ENCODE measurements at regions of chr2 and their contacts with region 1.

Region 1: DNA sequence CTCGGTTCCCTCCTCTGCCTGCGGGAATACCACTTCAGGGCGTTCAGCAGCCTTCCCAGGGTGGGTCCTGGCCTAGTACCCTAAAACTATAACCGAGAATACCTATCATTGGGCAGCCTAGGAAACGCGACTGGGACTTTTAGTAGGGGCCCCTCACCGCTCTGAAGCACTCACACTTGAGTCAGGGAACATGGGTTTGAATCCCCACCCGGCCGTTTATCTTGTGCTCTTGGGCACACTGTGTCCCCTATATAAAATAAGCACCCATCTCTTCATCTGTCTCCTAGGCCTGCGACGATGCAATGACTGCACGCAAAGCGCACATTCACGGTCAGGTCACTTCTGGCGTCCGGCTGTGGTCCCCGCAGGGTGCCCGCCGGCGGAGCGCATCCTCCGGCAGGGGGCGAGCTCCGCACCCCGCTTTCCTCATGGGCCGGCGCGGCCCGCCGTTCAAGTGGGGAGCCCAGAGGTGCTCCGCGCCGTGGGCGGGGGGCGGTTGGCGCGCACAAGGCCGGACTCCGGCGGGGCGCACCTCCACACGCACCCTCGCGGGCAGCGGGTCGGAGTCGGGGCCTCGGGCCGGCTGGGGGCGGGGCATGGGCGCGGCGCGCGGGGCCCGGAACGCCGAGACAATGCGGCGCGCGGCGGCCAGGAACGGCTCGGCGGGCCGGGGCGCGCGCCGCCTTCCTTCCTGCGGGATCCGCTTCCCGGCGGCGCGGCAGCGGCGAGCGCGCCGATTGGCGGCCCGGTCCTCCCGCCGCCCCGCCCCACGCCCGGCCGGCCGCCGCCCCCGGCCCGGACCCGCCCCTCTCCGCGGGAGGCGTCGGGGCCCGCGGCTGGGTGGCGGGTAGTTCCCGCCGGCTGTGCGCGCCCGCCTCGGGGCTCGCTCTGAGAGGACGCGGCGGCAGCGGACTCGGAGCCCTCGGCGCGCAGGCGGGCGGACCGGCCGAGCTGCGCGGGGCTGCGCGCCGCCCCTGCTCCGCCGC is at the start of gene ASAP2:
- DNase-seq: peak; percentile 51 to 81
- H3K4me3 ChIP-seq: peak within 1 kb of the TSS; percentile 99
- H3K27ac ChIP-seq: peak within 1 kb of the TSS; percentile 74
- H3K4me1 ChIP-seq: peaks cover 44% of the 10 kb centered on the region
- H3K27me3 ChIP-seq: no peaks in the 10 kb centered on the region
- CTCF ChIP-seq: peak; percentile 84
- total RNA-seq, gene ASAP2: 60.3 and 66.8 TPM in 2 replicates

Region 2: DNA sequence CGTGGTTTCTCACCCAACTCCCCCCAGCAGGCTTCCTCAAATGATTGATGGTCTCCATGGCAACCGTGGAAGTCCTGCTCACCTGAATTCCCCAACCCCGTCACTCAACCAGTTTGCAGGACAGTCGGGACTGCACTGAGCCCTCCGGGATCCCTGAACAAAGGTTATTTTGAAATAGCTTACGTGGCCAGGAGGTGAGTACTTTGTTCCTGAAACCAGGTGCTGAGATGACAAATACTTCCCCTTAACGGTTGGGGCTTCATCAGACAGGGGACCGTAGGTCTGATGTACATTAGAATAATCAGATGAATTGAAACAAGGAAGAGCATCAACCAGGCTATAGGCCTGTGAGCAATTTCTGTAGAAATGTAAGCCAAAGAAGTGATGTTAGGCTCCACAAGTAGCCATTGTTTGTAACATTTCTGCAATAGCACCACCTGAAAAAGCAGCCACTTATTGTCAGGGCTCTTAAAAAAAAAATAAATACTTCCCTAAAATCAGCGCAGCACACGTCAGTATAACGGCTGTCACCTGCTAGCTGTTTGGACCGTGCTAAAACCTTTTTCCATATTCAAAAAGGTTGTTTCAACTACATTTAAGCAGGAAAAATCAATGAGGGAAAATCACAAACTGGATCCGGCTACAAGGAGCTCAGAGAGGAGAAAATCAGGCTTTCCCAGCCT is 730.8 kb before region 1 on chr2:
- CTCF ChIA-PET with region 1: no interaction called
- POLR2A ChIA-PET with region 1: no interaction called
- intact Hi-C with region 1: no loop called
- DNase-seq: no peak
- H3K4me3 ChIP-seq: no peak overlapping the region
- H3K27ac ChIP-seq: no peak overlapping the region
- H3K4me1 ChIP-seq: no peaks in the 10 kb centered on the region
- H3K27me3 ChIP-seq: peaks cover 91% of the 10 kb centered on the region
- CTCF ChIP-seq: no peak

Region 3: DNA sequence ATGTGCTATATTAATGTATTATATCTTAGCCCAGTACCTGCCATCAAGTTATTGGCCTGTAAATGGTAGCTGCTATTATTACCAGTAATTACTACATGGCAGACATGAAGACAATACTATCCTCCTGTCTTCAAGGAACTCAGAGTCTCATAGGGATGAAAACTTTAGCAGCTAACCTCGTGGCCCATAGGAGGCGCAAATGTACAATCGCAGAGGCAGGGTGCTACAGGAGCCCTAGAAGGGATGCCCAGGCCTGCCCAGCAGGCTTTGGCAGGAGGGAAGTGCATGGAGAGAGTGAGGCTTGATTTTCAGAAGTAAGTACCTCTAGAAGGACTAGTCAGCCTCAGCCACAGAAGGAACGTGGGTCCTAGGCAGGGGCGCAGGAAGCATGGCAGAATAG is 324.2 kb before region 1 on chr2:
- CTCF ChIA-PET with region 1: no interaction called
- POLR2A ChIA-PET with region 1: no interaction called
- intact Hi-C with region 1: loop called (anchors 10 kb)
- DNase-seq: no peak
- H3K4me3 ChIP-seq: no peak overlapping the region
- H3K27ac ChIP-seq: no peak overlapping the region
- H3K4me1 ChIP-seq: no peaks in the 10 kb centered on the region
- H3K27me3 ChIP-seq: no peaks in the 10 kb centered on the region
- CTCF ChIP-seq: peak; percentile 52

Region 4: DNA sequence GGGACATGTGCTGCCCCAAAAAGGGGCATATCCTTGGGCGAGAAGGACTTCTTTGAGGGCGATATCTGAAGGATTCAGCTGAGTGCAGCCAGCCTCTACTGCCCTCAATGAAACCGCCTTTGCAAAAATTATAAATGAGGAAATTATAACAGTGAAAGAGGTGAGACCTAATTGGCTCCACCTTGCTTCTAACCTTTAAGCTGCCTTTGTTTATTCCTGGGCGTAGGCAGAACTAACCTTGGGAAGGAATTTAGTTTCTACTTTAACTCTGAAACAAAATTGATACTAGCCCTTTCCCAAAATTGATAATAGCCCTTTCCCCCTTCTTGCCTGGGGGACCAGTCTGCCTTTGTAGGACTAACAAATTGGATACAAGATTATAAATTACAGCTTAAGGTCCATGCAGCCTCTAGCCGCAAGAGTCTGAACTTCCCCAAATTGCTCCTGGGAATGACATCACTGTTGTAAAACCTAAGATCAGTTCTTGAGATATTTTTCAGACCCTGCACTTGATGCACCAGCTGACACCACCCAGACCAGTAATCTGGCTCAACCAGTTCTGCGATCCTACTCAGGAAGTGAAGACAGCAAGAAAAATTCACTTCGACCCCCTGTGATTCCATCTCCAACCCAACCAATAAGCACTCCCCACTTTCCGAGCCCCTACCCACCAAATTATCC is 35.7 kb before region 1 on chr2:
- CTCF ChIA-PET with region 1: interaction called, 4 read pairs
- POLR2A ChIA-PET with region 1: no interaction called
- intact Hi-C with region 1: loop called (anchors 2 kb)
- DNase-seq: peak; percentile 68 to 97
- H3K4me3 ChIP-seq: peak overlapping the region; percentile 32; the same call in 1 of the 2 replicates
- H3K27ac ChIP-seq: peak overlapping the region; percentile 73
- H3K4me1 ChIP-seq: peaks cover 85% of the 10 kb centered on the region
- H3K27me3 ChIP-seq: no peaks in the 10 kb centered on the region
- CTCF ChIP-seq: no peak; the same call in 1 of the 2 replicates

Region 5: GRCh38 chr2:9234680-9235387 is 28.6 kb after region 1 on chr2:
- CTCF ChIA-PET with region 1: interaction called, 5 read pairs
- POLR2A ChIA-PET with region 1: interaction called, 3 read pairs
- intact Hi-C with region 1: loop called (anchors 1 kb)
- DNase-seq: peak; percentile 90 to 99
- H3K4me3 ChIP-seq: peak overlapping the region; percentile 59
- H3K27ac ChIP-seq: peak overlapping the region; percentile 98
- H3K4me1 ChIP-seq: peaks cover 93% of the 10 kb centered on the region
- H3K27me3 ChIP-seq: no peaks in the 10 kb centered on the region
- CTCF ChIP-seq: no peak

Region 6: DNA sequence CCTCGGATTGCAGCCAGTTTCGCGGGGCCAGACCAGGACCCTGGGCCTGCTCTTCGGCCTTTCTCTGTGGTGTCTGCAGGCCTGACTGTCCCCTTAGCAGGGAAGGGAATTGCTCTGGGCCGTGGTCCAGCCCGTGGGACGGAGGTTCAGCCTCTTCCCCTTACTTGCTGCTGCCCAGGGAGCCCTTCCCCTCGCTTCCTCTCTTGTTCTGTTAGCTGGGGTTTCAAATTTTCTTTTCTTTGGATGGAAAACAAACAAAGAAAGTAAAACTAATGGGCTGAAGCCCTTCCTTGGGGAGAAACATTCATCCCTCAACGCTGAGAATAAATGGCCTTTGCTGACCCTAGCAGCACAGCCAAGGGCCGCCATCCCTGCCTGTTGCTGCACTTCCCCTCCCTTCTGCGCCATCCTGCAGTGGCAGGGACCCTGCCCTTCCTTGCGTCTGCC is 52.7 kb after region 1 on chr2:
- CTCF ChIA-PET with region 1: no interaction called
- POLR2A ChIA-PET with region 1: no interaction called
- intact Hi-C with region 1: loop called (anchors 2 kb)
- DNase-seq: no peak
- H3K4me3 ChIP-seq: no peak overlapping the region
- H3K27ac ChIP-seq: no peak overlapping the region
- H3K4me1 ChIP-seq: 0 out of 2 replicates have a peak, but pooled peaks cover 13% of the 10 kb centered on the region
- H3K27me3 ChIP-seq: no peaks in the 10 kb centered on the region
- CTCF ChIP-seq: no peak

Region 7: GRCh38 chr2:9322576-9322975 is 116.3 kb after region 1 on chr2:
- CTCF ChIA-PET with region 1: no interaction called
- POLR2A ChIA-PET with region 1: no interaction called
- intact Hi-C with region 1: no loop called
- DNase-seq: no peak
- H3K4me3 ChIP-seq: no peak overlapping the region
- H3K27ac ChIP-seq: no peak overlapping the region
- H3K4me1 ChIP-seq: peaks cover 14% of the 10 kb centered on the region; the same call in 1 of the 2 replicates
- H3K27me3 ChIP-seq: no peaks in the 10 kb centered on the region
- CTCF ChIP-seq: no peak

Region 8: DNA sequence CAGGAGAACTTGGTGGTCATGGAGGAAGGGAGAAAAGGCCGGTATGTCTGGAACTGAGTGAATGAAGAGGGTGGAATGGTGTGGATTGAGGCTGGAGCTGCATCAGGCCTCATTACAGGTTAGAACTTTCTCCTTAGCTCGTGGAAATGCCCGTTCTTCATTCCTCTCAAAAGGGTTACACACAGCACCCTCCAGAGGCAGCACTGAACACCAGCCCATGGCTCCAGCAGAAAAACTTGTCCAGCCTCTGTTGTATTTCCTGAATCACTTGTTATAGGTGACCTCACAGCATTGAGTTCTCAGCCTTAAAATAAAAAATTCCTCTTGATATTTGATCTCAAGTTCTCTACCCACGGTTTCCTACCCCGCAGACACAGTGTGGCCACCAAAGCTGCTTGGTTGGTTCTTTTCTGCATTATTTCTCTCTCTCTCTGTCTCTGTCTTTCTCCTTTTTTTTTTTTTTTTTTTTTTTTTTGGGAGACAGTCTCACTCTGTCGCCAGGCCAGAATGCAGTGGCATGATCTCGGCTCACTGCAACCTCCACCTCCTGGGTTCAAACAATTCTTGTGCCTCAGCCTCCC is 127.4 kb after region 1 on chr2:
- CTCF ChIA-PET with region 1: interaction called, 3 read pairs
- POLR2A ChIA-PET with region 1: no interaction called
- intact Hi-C with region 1: loop called (anchors 1 kb)
- DNase-seq: peak; percentile 76 to 92
- H3K4me3 ChIP-seq: no peak overlapping the region
- H3K27ac ChIP-seq: peak overlapping the region; percentile 50
- H3K4me1 ChIP-seq: peaks cover 55% of the 10 kb centered on the region
- H3K27me3 ChIP-seq: no peaks in the 10 kb centered on the region
- CTCF ChIP-seq: peak; percentile 75

Region 9: DNA sequence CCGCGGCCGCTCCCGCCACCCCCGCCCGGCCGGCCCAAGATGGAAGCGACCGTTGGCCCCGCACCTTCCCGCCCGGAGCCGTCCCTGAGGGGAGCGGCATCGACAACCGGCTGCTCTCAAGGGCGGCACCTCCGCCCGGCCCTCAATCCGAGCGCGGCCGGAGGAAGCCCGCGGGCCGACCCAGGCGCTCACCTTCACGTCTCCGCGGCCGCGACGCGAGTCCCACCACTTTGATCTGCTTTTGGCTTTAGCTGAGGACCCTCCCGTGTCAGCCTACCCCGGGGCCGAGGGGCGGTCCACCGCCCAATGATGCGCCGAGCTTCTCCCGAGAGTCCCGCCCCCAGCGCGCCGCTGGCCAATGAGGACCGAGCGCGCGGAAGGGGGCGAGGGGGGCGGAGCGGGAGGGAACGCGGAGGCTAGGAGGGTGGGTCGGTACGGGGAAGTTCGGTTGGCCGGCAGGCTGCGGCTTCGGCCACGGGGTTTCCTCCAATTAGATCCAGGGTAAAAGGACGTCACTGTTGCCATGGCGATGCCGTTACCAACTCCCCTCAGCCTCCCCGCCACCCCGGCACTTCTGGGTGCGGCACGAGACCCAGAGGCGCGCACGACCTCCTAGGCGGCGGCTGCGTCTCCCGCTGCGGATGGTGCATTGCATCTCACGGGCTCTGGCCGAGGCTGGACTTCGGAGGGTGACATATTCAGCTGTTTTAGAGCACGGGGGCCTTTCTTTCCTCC is 424.7 kb after region 1 on chr2 and contains the start of gene YWHAQ:
- CTCF ChIA-PET with region 1: no interaction called
- POLR2A ChIA-PET with region 1: interaction called, 11 read pairs
- intact Hi-C with region 1: no loop called
- DNase-seq: peak; percentile 93 to 98
- H3K4me3 ChIP-seq: peak within 1 kb of the TSS; percentile 91
- H3K27ac ChIP-seq: peak within 1 kb of the TSS; percentile 72
- H3K4me1 ChIP-seq: peaks cover 36% of the 10 kb centered on the region
- H3K27me3 ChIP-seq: no peaks in the 10 kb centered on the region
- CTCF ChIP-seq: no peak
- total RNA-seq, gene YWHAQ: 353 and 373 TPM in 2 replicates